ENCODE measurements at regions of chr10 and their contacts with region 1.

Region 1: DNA sequence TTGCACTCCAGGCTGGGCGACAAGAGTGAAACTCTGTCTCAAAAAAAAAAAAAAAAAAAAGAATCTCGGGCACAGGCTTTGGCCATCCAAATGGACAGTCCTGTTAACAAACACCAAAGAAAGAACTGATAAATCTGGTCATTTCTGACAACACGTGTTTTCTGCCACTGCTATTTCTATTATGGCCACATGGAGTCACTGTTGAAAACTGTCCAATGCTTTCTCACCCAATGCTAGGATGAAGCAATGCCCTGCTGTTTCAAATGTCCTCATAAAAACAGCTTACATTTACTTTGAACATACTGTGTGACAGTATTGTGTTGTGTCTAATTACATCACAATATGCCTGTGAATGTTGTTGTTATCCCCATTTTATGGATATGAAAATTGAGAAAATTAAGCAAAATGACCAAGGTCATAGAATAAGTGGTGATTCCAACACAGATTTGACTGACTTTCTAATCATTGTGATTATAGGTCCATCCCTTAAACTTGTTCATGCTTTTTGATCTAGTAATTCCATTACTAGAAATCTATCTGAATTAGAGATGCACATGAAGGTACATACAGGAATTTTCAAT is 19.9 kb upstream of the MAP3K8 start:
- DNase-seq: peak; percentile 40
- ATAC-seq: peak; percentile 71
- H3K4me3 Mint-ChIP-seq: no peak overlapping the region
- H3K27ac Mint-ChIP-seq: no peak overlapping the region
- H3K4me1 Mint-ChIP-seq: peaks cover 19% of the 10 kb centered on the region
- H3K27me3 Mint-ChIP-seq: no peaks in the 10 kb centered on the region
- CTCF ChIP-seq: peak; percentile 84

Region 2: DNA sequence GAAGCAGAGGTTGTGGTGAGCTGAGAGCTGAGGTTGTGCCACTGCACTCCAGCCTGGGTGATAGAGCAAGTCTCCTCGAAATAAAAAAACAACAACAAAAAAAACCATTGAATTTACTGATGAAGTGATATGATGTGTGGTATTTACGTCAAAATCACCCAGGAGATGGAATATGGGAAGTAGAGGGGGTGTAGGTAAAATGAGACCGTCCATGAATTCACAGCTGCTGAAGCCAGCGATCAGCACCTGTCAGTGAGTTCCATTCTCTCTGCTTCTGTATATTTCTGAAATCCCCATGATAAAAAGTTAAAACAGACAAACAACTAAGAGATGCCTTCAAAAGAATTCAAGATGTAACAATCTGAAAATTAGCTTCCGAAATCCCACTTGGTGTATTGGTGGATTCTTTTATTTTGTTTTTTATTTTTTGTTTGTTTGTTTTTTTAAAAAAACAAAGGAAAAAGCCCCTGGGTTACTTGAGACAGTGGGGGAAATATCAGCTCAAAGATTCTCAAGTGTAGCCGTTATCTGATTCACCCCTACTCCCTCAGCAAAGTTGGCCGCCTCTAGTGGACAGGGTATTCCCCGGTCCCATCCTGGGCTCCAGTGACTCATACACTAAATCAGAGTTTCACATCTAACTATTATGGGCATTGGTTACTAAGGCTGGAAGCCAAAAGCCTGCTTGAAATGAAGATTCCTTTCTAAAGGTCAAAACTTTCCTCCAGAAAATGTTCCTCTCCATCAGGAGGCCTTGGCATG is 96.3 kb after region 1 on chr10:
- CTCF ChIA-PET with region 1: no interaction called
- POLR2A ChIA-PET with region 1: no interaction called
- intact Hi-C with region 1: no loop called
- DNase-seq: peak; percentile 73
- ATAC-seq: peak; percentile 95
- H3K4me3 Mint-ChIP-seq: no peak overlapping the region
- H3K27ac Mint-ChIP-seq: peak overlapping the region; percentile 13
- H3K4me1 Mint-ChIP-seq: peaks cover 24% of the 10 kb centered on the region
- H3K27me3 Mint-ChIP-seq: no peaks in the 10 kb centered on the region
- CTCF ChIP-seq: no peak

Region 3: DNA sequence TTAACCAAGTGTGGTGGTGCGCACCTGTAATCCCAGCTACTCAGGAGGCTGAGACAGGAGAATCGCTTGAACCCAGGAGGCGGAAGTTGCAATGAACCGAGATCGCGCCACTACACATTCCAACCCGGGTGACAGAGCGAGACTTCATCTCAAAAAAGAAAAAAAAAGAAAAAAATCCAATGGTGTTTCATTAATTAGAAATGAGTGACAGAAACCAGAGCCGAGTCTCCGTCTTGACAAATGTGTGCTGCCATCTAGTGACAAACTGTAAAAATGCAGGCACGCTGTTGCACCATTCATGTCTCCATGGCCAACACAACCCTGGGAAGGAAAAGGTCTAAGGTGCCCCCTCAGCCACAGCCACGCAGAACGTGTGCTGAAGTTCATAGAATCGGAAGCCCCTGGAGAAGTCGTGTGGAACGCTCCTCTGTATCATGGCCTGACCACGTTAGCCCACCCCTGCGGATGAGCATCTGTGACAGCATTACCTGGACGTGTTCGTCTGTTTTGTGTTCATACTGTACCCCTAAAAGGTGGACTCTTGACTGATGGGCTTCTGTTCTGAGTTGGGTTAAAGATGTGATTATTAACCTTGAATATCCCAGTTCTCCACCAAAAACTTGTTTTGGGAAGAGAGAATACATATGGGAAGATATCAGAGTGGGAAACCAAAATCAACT is 120.5 kb after region 1 on chr10:
- CTCF ChIA-PET with region 1: interaction called, 50 read pairs
- POLR2A ChIA-PET with region 1: interaction called, 3 read pairs
- intact Hi-C with region 1: loop called (anchors 2 kb)
- DNase-seq: peak; percentile 87
- ATAC-seq: peak; percentile 55
- H3K4me3 Mint-ChIP-seq: no peak overlapping the region
- H3K27ac Mint-ChIP-seq: no peak overlapping the region
- H3K4me1 Mint-ChIP-seq: peaks cover 29% of the 10 kb centered on the region
- H3K27me3 Mint-ChIP-seq: no peaks in the 10 kb centered on the region
- CTCF ChIP-seq: peak; percentile 90

Region 4: GRCh38 chr10:30542001-30542894 is 128.2 kb after region 1 on chr10:
- CTCF ChIA-PET with region 1: interaction called, 19 read pairs
- POLR2A ChIA-PET with region 1: no interaction called
- intact Hi-C with region 1: no loop called
- DNase-seq: no peak
- ATAC-seq: peak; percentile 45
- H3K4me3 Mint-ChIP-seq: no peak overlapping the region
- H3K27ac Mint-ChIP-seq: no peak overlapping the region
- H3K4me1 Mint-ChIP-seq: peaks cover 12% of the 10 kb centered on the region
- H3K27me3 Mint-ChIP-seq: peaks cover 2% of the 10 kb centered on the region
- CTCF ChIP-seq: no peak